ENCODE measurements at regions of chr10 and their contacts with region 1.

Region 1: DNA sequence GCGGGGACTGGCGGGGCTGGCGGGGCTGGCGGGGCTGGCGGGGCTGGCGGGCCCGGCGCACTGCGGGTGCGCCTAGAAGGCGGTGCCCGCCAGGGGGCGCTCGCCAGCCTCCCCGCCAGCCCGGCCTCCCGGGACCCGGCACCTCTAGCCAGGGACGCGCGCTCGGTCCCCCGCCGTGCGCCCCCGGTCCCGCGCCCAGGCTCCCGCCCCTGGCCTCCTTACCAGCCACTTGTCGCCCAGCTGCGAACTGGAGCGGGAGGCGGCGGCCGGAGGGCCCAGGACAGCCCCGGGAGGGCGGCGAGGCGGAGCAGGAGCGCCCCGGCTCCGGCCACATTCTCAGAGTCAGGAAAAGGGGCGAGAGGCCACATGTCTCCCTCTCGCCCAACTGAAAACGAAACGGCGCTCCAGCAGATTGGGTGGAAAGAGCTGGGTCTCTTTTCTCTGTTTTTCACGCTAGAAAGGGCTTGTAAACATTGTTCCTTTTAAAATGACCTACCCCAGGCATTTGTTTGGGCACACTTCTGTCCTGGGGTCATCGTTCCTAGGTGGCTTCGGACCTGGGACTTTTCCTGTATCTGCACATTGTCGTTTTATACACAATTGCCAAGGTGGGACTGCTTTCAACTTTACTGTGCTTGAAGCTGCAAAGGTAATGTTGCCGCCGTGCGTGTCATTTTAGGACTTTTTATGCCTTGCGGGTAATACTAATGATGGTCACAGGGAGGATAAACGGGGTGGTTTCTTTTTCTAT is 378 bp upstream of the PRKCQ start:
- DNase-seq: peak; percentile 76 to 86 (median 82)
- H3K4me3 ChIP-seq: peak overlapping the region; percentile 83 to 86
- H3K4me3 Mint-ChIP-seq: peak overlapping the region; percentile 90 to 99 (median 94)
- H3K27ac ChIP-seq: peak overlapping the region; percentile 90
- H3K27ac Mint-ChIP-seq: peak overlapping the region; percentile 93 to 99 (median 96)
- H3K4me1 ChIP-seq: peaks cover 63% of the 10 kb centered on the region
- H3K4me1 Mint-ChIP-seq: peaks cover 40 to 82% (median 52%) of the 10 kb centered on the region in 4 donors
- H3K27me3 ChIP-seq: no peaks in the 10 kb centered on the region
- H3K27me3 Mint-ChIP-seq: no peaks in the 10 kb centered on the region

Region 2: GRCh38 chr10:5983774-5984173 is 596.7 kb before region 1 on chr10:
- CTCF ChIA-PET with region 1: no interaction called
- POLR2A ChIA-PET with region 1: no interaction called
- intact Hi-C with region 1: no loop called
- DNase-seq: no peak
- H3K4me3 ChIP-seq: no peak overlapping the region
- H3K4me3 Mint-ChIP-seq: no peak overlapping the region
- H3K27ac ChIP-seq: no peak overlapping the region
- H3K27ac Mint-ChIP-seq: no peak overlapping the region
- H3K4me1 ChIP-seq: peaks cover 5% of the 10 kb centered on the region
- H3K4me1 Mint-ChIP-seq: peaks cover 6 to 15% (median 11%) of the 10 kb centered on the region in 4 donors
- H3K27me3 ChIP-seq: no peaks in the 10 kb centered on the region
- H3K27me3 Mint-ChIP-seq: peaks cover 0 to 2% of the 10 kb centered on the region in 2 donors

Region 3: GRCh38 chr10:6498771-6499170 is 81.7 kb before region 1 on chr10:
- CTCF ChIA-PET with region 1: interaction called, 10 read pairs
- POLR2A ChIA-PET with region 1: interaction called, 12 read pairs
- intact Hi-C with region 1: loop called (anchors 2 kb)
- DNase-seq: peak; percentile 62 to 83 (median 74)
- H3K4me3 ChIP-seq: peak overlapping the region in 1 of 2 donors; percentile 4
- H3K4me3 Mint-ChIP-seq: peak overlapping the region in 7 of 8 donors; percentile 39 to 87 (median 75)
- H3K27ac ChIP-seq: peak overlapping the region; percentile 59
- H3K27ac Mint-ChIP-seq: peak overlapping the region in 6 of 7 donors; percentile 91 to 96 (median 95)
- H3K4me1 ChIP-seq: peaks cover 65% of the 10 kb centered on the region
- H3K4me1 Mint-ChIP-seq: peaks cover 40 to 49% (median 48%) of the 10 kb centered on the region in 4 donors
- H3K27me3 ChIP-seq: no peaks in the 10 kb centered on the region
- H3K27me3 Mint-ChIP-seq: no peaks in the 10 kb centered on the region

Region 4: GRCh38 chr10:6542999-6543430 is 37.4 kb before region 1 on chr10:
- CTCF ChIA-PET with region 1: interaction called, 23 read pairs
- POLR2A ChIA-PET with region 1: interaction called, 64 read pairs
- intact Hi-C with region 1: loop called (anchors 1 kb)
- DNase-seq: peak; percentile 70 to 81 (median 78)
- H3K4me3 ChIP-seq: peak overlapping the region in 1 of 2 donors; percentile 30
- H3K4me3 Mint-ChIP-seq: peak overlapping the region; percentile 88 to 98 (median 93)
- H3K27ac ChIP-seq: peak overlapping the region; percentile 66
- H3K27ac Mint-ChIP-seq: peak overlapping the region; percentile 96 to 100 (median 99)
- H3K4me1 ChIP-seq: peaks cover 83% of the 10 kb centered on the region
- H3K4me1 Mint-ChIP-seq: peaks cover 67 to 86% (median 77%) of the 10 kb centered on the region in 4 donors
- H3K27me3 ChIP-seq: no peaks in the 10 kb centered on the region
- H3K27me3 Mint-ChIP-seq: no peaks in the 10 kb centered on the region

Region 5: DNA sequence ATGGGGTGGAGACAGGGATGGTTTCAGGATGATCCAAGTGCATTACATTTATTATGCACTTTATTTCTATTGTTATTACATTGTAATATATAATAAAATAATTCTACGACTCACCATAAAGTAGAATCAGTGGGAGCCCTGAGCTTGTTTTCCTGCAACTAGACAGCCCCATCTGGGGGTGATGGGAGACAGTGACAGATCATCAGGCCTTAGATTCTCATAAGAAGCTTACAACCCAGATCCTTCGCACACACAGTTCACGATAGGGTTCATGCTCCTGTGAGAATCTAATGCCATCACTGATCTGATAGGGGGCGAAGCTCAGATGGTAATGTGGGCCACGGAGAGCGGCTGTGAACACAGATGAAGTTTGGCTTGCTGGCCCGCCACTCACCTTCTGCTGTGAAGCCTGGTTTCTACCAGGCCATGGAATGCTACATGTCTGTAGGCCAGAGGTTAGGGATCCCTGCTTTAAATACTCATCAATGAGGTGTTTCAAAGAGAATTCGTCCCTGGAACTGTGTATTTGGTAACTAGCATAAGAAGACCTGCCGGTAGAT is 20.9 kb after region 1 on chr10:
- CTCF ChIA-PET with region 1: interaction called, 106 read pairs
- POLR2A ChIA-PET with region 1: interaction called, 355 read pairs
- intact Hi-C with region 1: loop called (anchors 1 kb)
- DNase-seq: peak; percentile 47 to 55 (median 53)
- H3K4me3 ChIP-seq: no peak overlapping the region
- H3K4me3 Mint-ChIP-seq: peak overlapping the region in 7 of 8 donors; percentile 38 to 85 (median 77)
- H3K27ac ChIP-seq: no peak overlapping the region
- H3K27ac Mint-ChIP-seq: peak overlapping the region; percentile 63 to 92 (median 85)
- H3K4me1 ChIP-seq: peaks cover 67% of the 10 kb centered on the region
- H3K4me1 Mint-ChIP-seq: peaks cover 46 to 81% (median 63%) of the 10 kb centered on the region in 4 donors
- H3K27me3 ChIP-seq: no peaks in the 10 kb centered on the region
- H3K27me3 Mint-ChIP-seq: no peaks in the 10 kb centered on the region

Region 6: DNA sequence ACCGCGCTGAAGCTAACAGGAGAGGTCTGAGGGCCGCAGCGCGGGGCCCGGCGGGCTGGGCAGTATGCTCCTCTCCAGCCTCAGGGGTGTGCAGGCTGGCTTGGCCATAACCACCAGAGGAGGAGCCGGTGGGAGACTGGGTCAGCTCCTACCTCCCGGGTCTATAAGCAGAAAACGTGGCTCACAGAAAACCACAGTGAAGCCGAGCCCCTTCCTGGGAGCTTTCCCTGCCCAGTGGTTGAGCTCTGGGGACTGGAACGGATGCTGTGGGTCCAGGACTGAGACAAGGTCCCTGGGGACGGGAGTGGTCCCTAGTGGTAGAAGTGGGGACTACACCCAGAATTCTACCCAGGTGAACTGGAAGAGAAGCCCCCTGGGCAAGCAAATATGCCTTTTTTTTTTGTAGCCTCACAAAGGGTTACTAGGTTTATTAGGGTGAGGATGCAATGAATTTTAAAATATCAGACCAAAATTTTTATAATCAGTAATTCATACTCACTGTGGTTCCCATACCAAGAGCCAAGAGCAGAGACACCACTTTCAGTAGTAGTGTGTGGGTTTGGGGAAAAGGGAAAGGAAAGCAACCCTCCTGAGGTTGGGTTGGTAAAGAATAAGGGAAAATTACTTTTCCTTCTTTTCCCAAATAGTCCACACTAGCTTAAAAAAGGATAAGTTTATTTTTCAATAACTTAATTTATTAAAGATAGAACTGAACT is 67.5 kb after region 1 on chr10:
- CTCF ChIA-PET with region 1: interaction called, 39 read pairs
- POLR2A ChIA-PET with region 1: interaction called, 38 read pairs
- intact Hi-C with region 1: loop called (anchors 1 kb)
- DNase-seq: peak; percentile 61 to 72 (median 65)
- H3K4me3 ChIP-seq: no peak overlapping the region
- H3K4me3 Mint-ChIP-seq: no peak overlapping the region
- H3K27ac ChIP-seq: no peak overlapping the region
- H3K27ac Mint-ChIP-seq: peak overlapping the region in 3 of 7 donors; percentile 4 to 75 (median 72)
- H3K4me1 ChIP-seq: peaks cover 23% of the 10 kb centered on the region
- H3K4me1 Mint-ChIP-seq: peaks cover 12 to 30% (median 17%) of the 10 kb centered on the region in 4 donors
- H3K27me3 ChIP-seq: no peaks in the 10 kb centered on the region
- H3K27me3 Mint-ChIP-seq: no peaks in the 10 kb centered on the region

Measured in CD4-positive, alpha-beta memory T cell (primary cell).